Ascending aorta (tissue), 2 donors: ENCODE measurements at regions of chr6 and their contacts with region 1.

Region 1: DNA sequence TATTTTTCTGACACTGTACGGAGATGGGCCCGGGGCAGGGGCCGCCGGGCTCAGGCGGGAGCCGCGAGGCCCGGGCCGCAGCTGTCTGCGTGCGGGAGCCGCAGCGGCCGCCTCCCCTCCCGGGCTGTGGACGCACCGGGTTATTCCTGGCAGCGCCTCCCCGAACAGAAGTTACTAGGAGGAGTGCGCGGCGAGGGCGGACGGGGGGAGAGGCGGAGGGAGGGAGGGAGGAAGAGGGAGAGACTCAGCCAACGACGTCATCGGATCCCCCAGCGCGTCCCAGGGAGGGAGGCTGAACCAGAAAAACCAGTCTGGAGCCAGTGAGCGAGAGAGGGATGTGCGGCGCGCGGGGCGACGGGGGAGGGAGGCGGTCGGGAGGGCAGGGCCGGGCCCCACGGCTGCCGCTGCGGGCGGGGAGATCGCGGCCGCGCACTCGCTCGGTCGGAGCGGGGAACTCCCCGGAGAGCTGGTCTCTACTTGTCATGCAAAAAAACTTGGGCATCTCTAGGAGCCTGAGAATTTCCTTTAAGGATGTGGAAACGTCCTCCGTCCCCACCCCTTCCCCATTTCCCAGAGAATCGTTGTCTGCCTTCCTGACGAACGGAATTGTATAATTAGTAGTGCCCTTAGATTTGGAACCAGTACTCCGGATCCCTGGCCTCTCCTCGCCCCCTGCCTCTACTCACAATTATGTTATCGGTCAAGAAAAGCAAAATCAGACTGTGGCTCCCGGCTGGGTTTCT is 1.4 kb upstream of the HIVEP2 start:
- DNase-seq: peak; percentile 92 to 99
- H3K4me3 ChIP-seq: peak overlapping the region; percentile 74 to 92
- H3K27ac ChIP-seq: peak overlapping the region; percentile 98 to 99
- H3K4me1 ChIP-seq: peaks cover 6 to 11% of the 10 kb centered on the region in 2 donors
- H3K27me3 ChIP-seq: no peaks in the 10 kb centered on the region
- CTCF ChIP-seq: no peak

Region 2: DNA sequence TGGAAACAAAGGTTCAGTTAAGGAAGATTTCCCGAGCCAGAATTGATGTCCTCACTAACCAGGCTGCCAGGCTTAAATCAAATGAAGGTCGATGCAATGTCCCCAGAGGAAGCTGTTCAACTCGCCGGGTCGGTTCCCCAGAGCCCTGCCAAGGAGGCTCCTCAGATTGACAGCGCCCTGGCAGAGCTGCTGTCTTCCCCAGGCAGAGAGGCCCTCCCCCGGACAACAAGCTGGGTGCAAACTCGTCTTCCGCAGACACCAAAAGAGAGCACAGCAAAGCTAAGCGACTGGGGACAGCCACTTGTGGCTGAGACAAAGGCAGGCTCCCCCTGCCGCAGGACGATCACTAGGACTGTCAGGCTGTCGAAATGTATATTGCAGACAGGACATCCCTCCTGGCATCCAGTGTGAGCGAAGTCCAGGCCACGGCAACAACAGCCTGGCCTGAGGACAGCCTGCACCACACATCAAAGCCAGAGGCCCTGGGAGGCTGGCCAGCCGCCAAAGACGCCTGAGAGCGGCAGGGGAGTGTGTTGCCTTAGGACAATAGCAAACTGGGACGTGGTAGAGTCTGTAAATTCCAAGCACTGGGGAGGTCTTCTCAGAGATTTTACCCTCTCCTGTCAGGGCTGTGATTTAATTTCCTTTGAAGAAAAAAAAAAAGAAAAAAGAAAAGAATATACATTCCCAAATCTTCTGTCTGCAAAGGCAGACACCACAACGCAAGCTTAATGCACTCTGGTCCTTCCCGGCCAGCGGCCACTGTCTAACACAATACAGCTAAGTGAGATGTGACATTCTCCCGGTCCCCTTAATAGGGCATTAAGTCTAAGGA is 100.5 kb before region 1 on chr6:
- intact Hi-C with region 1: loop called (anchors 1 kb)
- DNase-seq: peak; percentile 43 to 87
- H3K4me3 ChIP-seq: peak overlapping the region; percentile 44 to 53
- H3K27ac ChIP-seq: peak overlapping the region; percentile 72 to 75
- H3K4me1 ChIP-seq: peaks cover 12 to 68% of the 10 kb centered on the region in 2 donors
- H3K27me3 ChIP-seq: no peaks in the 10 kb centered on the region
- CTCF ChIP-seq: no peak

Region 3: GRCh38 chr6:142926494-142927270 is 19.7 kb before region 1 on chr6:
- intact Hi-C with region 1: loop called (anchors 1 kb)
- DNase-seq: peak in 1 of 2 donors; percentile 88
- H3K4me3 ChIP-seq: peak overlapping the region; percentile 75 to 78
- H3K27ac ChIP-seq: peak overlapping the region; percentile 81 to 88
- H3K4me1 ChIP-seq: peaks cover 0 to 13% of the 10 kb centered on the region in 2 donors
- H3K27me3 ChIP-seq: no peaks in the 10 kb centered on the region
- CTCF ChIP-seq: no peak

Region 4: GRCh38 chr6:143136647-143137046 is 190.3 kb after region 1 on chr6:
- intact Hi-C with region 1: loop called (anchors 5 kb)
- DNase-seq: no peak
- H3K4me3 ChIP-seq: no peak overlapping the region
- H3K27ac ChIP-seq: peak overlapping the region; percentile 2 to 41
- H3K4me1 ChIP-seq: peaks cover 3 to 14% of the 10 kb centered on the region in 2 donors
- H3K27me3 ChIP-seq: no peaks in the 10 kb centered on the region
- CTCF ChIP-seq: no peak

Region 5: GRCh38 chr6:143677891-143678791 is 731.8 kb after region 1 on chr6 and contains the start of gene PHACTR2:
- intact Hi-C with region 1: loop called (anchors 5 kb)
- DNase-seq: peak; percentile 47 to 92
- H3K4me3 ChIP-seq: peak within 1 kb of the TSS; percentile 72 to 92
- H3K27ac ChIP-seq: peak within 1 kb of the TSS; percentile 95 to 98
- H3K4me1 ChIP-seq: peaks cover 4 to 29% of the 10 kb centered on the region in 2 donors
- H3K27me3 ChIP-seq: no peaks in the 10 kb centered on the region
- CTCF ChIP-seq: no peak
- total RNA-seq, gene PHACTR2: 112 TPM